Cardiac septum (tissue), 1 donor: ENCODE measurements at regions of chr19 and their contacts with region 1.

Region 1: DNA sequence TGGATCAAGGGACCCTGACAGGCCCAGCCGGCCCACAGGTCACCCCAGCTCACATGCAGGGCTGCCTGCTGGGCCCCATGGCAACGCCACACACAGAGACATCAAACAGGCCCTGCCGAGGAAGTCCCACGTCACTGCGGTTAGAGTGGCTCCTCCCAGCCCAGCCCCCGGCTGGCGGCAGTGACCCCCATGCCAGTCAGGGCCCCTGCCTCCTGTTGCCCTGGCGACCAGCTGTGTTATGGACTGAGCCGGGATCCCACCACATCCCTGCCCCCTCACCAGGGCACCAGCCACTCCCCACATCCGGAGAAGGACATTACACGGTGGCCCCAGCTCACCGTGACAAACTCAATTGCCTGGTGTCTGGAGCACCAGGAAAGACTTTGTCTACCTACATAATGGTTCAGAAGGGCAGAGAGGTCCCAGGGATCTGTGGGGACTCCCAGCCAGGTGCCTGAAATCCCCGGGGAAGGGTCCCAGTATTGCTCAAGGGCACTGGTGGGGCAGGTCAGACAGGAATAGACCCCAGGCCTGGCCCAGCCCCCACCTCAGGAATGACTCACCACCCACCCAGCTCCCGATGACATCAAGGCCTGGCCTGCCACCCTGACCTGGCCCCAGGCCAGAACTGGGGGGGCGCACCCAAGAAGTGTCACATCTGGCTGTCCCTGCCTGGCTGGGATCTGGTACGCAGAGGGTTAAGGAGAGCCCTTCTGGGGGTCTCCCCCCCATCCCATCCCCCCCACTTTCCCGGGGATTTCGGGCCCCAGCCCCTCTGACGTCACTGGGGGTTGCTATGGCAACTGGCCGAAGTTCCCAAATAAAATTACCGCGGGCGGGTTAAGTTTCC is 30.2 kb upstream of the NANOS3 start:
- DNase-seq: peak; percentile 96

Region 2: GRCh38 chr19:12789904-12790619 is 1056.7 kb before region 1 on chr19:
- intact Hi-C with region 1: loop called (anchors 10 kb)
- DNase-seq: peak; percentile 99